ENCODE measurements at regions of chr10 and their contacts with region 1.

Region 1: GRCh38 chr10:104054430-104054829 is 31.2 kb downstream of the COL17A1 start:
- DNase-seq: no peak
- H3K4me3 ChIP-seq: no peak overlapping the region
- H3K27ac ChIP-seq: no peak overlapping the region
- H3K4me1 ChIP-seq: peaks cover 2 to 9% (median 4%) of the 10 kb centered on the region in 4 experiments; a peak in 4 of 7 replicates
- H3K27me3 ChIP-seq: no peaks in the 10 kb centered on the region
- CTCF ChIP-seq: no peak
- EP300 ChIP-seq: no peak
- POLR2A ChIP-seq: no peak
- RAD21 ChIP-seq: no peak

Region 2: GRCh38 chr10:104067525-104067924 is 13.1 kb after region 1 on chr10:
- CTCF ChIA-PET with region 1: interaction called, 35 read pairs
- POLR2A ChIA-PET with region 1: no interaction called
- DNase-seq: no peak
- H3K4me3 ChIP-seq: peak overlapping the region in 2 of 4 experiments; percentile 3 to 32; a peak in 3 of 8 replicates
- H3K27ac ChIP-seq: 0 out of 2 replicates have a peak overlapping the region, but pooled peaks have one; percentile 30
- H3K4me1 ChIP-seq: peaks cover 2 to 16% (median 8%) of the 10 kb centered on the region in 4 experiments; a peak in 6 of 7 replicates
- H3K27me3 ChIP-seq: peaks cover 0 to 2% (median 0%) of the 10 kb centered on the region in 4 experiments; a peak in 1 of 7 replicates
- CTCF ChIP-seq: no peak
- EP300 ChIP-seq: no peak
- POLR2A ChIP-seq: no peak
- RAD21 ChIP-seq: no peak

Region 3: DNA sequence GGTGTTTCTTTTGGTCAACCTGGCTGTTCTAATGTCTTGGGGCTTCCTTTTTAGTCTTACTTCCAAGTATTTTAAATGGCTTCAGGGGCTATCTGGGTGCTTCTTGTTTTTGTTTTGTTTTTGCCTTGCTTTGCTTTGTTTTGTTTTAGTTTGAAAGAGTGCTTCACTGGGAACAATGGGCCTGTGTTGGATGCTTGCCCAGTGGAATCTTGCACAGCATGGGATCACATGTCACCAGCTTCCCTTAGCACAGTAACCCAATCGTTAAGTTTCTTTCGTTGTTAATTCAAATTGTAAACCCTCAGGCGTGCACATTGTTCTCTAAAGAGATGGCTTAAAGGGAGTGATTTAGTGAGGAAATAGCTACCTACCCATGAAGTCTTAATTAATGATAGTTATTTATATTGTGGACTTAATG is 22.3 kb after region 1 on chr10:
- CTCF ChIA-PET with region 1: interaction called, 16 read pairs
- POLR2A ChIA-PET with region 1: interaction called, 5 read pairs
- DNase-seq: peak in 1 of 2 experiments; percentile 50
- H3K4me3 ChIP-seq: peak overlapping the region in 1 of 4 experiments; percentile 17; a peak in 2 of 8 replicates
- H3K27ac ChIP-seq: 0 out of 2 replicates have a peak overlapping the region, but pooled peaks have one; percentile 53
- H3K4me1 ChIP-seq: peaks cover 6 to 10% (median 8%) of the 10 kb centered on the region in 4 experiments
- H3K27me3 ChIP-seq: no peaks in the 10 kb centered on the region
- CTCF ChIP-seq: no peak
- EP300 ChIP-seq: no peak
- POLR2A ChIP-seq: no peak
- RAD21 ChIP-seq: no peak

Region 4: DNA sequence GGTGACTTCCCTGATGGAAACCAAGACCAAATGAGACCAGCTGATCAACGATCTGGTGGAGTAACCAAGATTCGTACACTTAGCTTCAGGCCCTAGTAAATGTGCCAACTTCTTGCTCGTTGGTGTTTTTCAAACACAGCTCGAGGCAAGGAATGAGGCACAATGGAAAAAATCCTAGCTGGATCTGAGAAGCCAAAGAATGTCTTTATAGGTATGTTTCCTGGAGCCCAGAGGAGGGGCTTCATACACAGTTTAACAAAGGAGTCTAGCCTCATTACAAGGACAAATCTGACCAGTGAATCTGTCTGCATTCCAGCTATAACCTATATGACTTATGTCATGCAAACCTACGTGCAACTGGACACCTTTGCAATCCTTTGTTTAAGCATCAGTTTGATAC is 27.6 kb after region 1 on chr10:
- CTCF ChIA-PET with region 1: interaction called, 16 read pairs
- POLR2A ChIA-PET with region 1: interaction called, 5 read pairs
- DNase-seq: no peak
- H3K4me3 ChIP-seq: no peak overlapping the region
- H3K27ac ChIP-seq: no peak overlapping the region
- H3K4me1 ChIP-seq: peaks cover 3 to 10% (median 4%) of the 10 kb centered on the region in 4 experiments
- H3K27me3 ChIP-seq: no peaks in the 10 kb centered on the region
- CTCF ChIP-seq: no peak
- EP300 ChIP-seq: no peak
- POLR2A ChIP-seq: no peak
- RAD21 ChIP-seq: no peak

Region 5: DNA sequence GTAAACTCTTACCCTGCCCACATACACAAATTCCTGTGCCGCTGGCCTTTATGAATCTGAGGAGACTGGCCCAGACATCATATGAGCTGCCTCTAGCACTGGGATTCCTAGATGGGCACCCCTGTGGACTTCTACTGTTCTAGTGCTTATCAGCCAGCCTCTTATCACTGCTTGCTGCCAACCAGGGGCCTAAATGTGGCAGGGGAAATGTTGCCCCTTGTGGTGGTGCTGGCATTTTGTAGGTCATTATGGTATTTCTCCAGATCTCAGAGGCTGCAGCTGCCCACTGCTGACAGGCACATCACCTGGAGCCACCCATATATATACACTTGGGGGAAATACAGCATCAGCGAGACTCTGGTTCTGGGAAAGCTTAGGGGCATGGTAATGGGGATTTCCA is 73.0 kb after region 1 on chr10:
- CTCF ChIA-PET with region 1: interaction called, 32 read pairs
- POLR2A ChIA-PET with region 1: interaction called, 43 read pairs
- DNase-seq: peak in 1 of 2 experiments; percentile 54
- H3K4me3 ChIP-seq: no peak overlapping the region
- H3K27ac ChIP-seq: no peak overlapping the region
- H3K4me1 ChIP-seq: no peaks in the 10 kb centered on the region; a peak in 2 of 7 replicates
- H3K27me3 ChIP-seq: no peaks in the 10 kb centered on the region
- CTCF ChIP-seq: peak; percentile 51 to 70 (median 60)
- EP300 ChIP-seq: no peak
- POLR2A ChIP-seq: no peak
- RAD21 ChIP-seq: peak; percentile 50 to 61

Measured in H1 (cell line).